Ascending aorta (tissue), 2 donors: ENCODE measurements at regions of chr2 and their contacts with region 1.

Region 1: GRCh38 chr2:144449028-144449406 is 70.9 kb downstream of the ZEB2 start:
- DNase-seq: peak in 1 of 2 donors; percentile 75
- H3K4me3 ChIP-seq: peak overlapping the region; percentile 44 to 58
- H3K27ac ChIP-seq: peak overlapping the region; percentile 60 to 63
- H3K4me1 ChIP-seq: peaks cover 5 to 45% of the 10 kb centered on the region in 2 donors
- H3K27me3 ChIP-seq: no peaks in the 10 kb centered on the region
- CTCF ChIP-seq: peak; percentile 33 to 70 (median 49)

Region 2: GRCh38 chr2:144374163-144374661 is 74.8 kb before region 1 on chr2:
- intact Hi-C with region 1: no loop called
- DNase-seq: no peak
- H3K4me3 ChIP-seq: no peak overlapping the region
- H3K27ac ChIP-seq: no peak overlapping the region
- H3K4me1 ChIP-seq: no peaks in the 10 kb centered on the region
- H3K27me3 ChIP-seq: no peaks in the 10 kb centered on the region
- CTCF ChIP-seq: no peak

Region 3: GRCh38 chr2:144430722-144431391 is 18.2 kb before region 1 on chr2:
- intact Hi-C with region 1: loop called (anchors 2 kb)
- DNase-seq: peak in 1 of 2 donors; percentile 79
- H3K4me3 ChIP-seq: peak overlapping the region; percentile 42 to 60
- H3K27ac ChIP-seq: peak overlapping the region; percentile 73 to 80
- H3K4me1 ChIP-seq: peaks cover 0 to 43% of the 10 kb centered on the region in 2 donors
- H3K27me3 ChIP-seq: no peaks in the 10 kb centered on the region
- CTCF ChIP-seq: no peak

Region 4: DNA sequence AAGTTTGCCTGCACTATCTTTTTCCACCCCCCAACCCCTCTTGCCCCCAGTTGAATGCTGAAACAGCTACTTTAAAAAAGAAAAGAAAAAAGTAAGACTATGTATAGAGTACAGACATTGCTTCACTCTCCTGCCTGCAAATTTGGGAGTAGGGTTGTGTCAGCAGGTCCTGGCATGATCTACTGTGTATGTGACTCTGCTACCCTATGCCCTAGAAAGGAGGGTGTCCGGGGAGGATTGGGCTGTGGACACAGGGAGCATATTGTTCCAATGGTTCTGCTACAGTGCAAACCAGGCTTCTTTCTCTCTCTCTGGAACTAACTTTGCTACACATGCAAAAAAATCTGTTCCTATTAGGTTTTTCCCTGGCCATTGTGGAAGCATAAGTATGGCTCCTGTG is 80.8 kb after region 1 on chr2:
- intact Hi-C with region 1: no loop called
- DNase-seq: no peak
- H3K4me3 ChIP-seq: no peak overlapping the region
- H3K27ac ChIP-seq: peak overlapping the region in 1 of 2 donors; percentile 26
- H3K4me1 ChIP-seq: peaks cover 0 to 20% of the 10 kb centered on the region in 2 donors
- H3K27me3 ChIP-seq: no peaks in the 10 kb centered on the region
- CTCF ChIP-seq: no peak

Region 5: DNA sequence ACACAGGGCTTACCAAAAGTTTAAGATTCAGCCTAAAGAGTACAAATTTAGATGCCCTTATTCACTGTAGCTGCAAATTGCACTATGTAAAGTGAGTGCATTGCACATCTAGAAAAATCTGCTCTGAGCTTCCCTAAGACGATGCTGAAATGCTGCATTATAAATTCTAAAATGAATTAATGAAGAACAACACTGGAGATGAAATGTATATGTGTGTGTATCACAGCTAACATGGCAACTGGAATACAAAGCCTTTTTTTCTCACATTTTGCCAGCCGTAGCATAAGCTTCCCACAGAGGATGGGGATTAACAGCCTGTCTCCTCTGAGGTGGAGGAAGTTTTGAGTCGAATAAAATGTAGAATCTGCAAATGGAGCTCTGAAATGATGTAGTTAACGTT is 409.2 kb after region 1 on chr2:
- intact Hi-C with region 1: no loop called
- DNase-seq: no peak
- H3K4me3 ChIP-seq: no peak overlapping the region
- H3K27ac ChIP-seq: no peak overlapping the region
- H3K4me1 ChIP-seq: no peaks in the 10 kb centered on the region
- H3K27me3 ChIP-seq: no peaks in the 10 kb centered on the region
- CTCF ChIP-seq: no peak

Region 6: DNA sequence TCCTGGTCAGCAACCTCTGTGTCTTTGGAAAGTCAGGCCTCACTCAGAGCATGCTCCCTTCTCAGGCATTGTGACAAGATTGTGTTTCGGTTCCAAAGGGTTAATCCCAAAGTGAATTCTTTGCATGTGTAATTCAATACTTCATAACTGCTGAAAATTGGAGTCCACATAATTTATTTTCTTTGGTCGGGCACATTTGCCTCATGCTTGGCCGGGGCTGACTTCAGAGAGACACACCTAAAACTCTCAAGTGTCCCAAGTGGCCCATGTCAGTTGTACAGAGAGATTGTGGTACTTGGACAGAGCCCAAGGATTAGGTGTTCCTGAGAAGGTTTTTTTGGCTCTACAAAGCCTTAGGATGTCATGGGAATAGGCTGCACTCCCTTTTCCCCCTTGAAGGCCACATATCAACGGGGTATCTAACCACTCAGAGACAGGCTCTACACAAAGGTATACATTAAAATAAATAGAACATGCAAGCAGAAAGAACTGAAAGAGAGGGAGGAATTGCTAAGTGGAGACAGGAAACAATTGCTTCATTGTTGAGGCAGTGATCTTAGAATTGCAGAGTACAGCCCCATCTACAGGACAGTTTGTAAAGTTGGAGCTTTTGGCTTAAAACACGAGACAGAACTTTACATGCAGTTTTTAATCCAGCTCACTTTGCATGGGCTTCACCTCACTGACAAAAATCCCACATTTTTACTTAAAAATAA is 1303.2 kb after region 1 on chr2:
- intact Hi-C with region 1: loop called (anchors 10 kb)
- DNase-seq: peak in 1 of 2 donors; percentile 64
- H3K4me3 ChIP-seq: peak overlapping the region in 1 of 2 donors; percentile 26
- H3K27ac ChIP-seq: peak overlapping the region; percentile 51 to 62
- H3K4me1 ChIP-seq: peaks cover 3 to 21% of the 10 kb centered on the region in 2 donors
- H3K27me3 ChIP-seq: no peaks in the 10 kb centered on the region
- CTCF ChIP-seq: peak; percentile 41 to 71 (median 56)